Activated CD4-positive, alpha-beta memory T cell treated with anti-CD3 and anti-CD28 coated beads for 36 hours (primary cell): ENCODE measurements at regions of chr15 and their contacts with region 1.

Region 1: GRCh38 chr15:40893733-40894688 is at the start of gene VPS18:
- DNase-seq: peak; percentile 99
- H3K4me3 Mint-ChIP-seq: peak within 1 kb of the TSS; percentile 99
- H3K27ac Mint-ChIP-seq: peak within 1 kb of the TSS; percentile 86
- H3K4me1 Mint-ChIP-seq: peaks cover 27% of the 10 kb centered on the region
- H3K27me3 Mint-ChIP-seq: no peaks in the 10 kb centered on the region
- total RNA-seq, gene VPS18: 7.8 to 8.8 TPM

Region 2: GRCh38 chr15:40564591-40565332 is 329.2 kb before region 1 on chr15 and contains the start of gene CCDC32:
- CTCF ChIA-PET with region 1: interaction called, 3 read pairs
- POLR2A ChIA-PET with region 1: interaction called, 5 read pairs
- intact Hi-C with region 1: loop called (anchors 5 kb)
- DNase-seq: peak; percentile 98
- H3K4me3 Mint-ChIP-seq: peak within 1 kb of the TSS; percentile 96
- H3K27ac Mint-ChIP-seq: peak within 1 kb of the TSS; percentile 92
- H3K4me1 Mint-ChIP-seq: peaks cover 48% of the 10 kb centered on the region
- H3K27me3 Mint-ChIP-seq: peaks cover 2% of the 10 kb centered on the region
- total RNA-seq, gene CCDC32: 28.6 to 29.2 TPM

Region 3: GRCh38 chr15:40684381-40684780 is 209.6 kb before region 1 on chr15:
- CTCF ChIA-PET with region 1: interaction called, 9 read pairs
- POLR2A ChIA-PET with region 1: no interaction called
- intact Hi-C with region 1: loop called (anchors 2 kb)
- DNase-seq: no peak
- H3K4me3 Mint-ChIP-seq: no peak overlapping the region
- H3K27ac Mint-ChIP-seq: no peak overlapping the region
- H3K4me1 Mint-ChIP-seq: no peaks in the 10 kb centered on the region
- H3K27me3 Mint-ChIP-seq: no peaks in the 10 kb centered on the region

Region 4: DNA sequence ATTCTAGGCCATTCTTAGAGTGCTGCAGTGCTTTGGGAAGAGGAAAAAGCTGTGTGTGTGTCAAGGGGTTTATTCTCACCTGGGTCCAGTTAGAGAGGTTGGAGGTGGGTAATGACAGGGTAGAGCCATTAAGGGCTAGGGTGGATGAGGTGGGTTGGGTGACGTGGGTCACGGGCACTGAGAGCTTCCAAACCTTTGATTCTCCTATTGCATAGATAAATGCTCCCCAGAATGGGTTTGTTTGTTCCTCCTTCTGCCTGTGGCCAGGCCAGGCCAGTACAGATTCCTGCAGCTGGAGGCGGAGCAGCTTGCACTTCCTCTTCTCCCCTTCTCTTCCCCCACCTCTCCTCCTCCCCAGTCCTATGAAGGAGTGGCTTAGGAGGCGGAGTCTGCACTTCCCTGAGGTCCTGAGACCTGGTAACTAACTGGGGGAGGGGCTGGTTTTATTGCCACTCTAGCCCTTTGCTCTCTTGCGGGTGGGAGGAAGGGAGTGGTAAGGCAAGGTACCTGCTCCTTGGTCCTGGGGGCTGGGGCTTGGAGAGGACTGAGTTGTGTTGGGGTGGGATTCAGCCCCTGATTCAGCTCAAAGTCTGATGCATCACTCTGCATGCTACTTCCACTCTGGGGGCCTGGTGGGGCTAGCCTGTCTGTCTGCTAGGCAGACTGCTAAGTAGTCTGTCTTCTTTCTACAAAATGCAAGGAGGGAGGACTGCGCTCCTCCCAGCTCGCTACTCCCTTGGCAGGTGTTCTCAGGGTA is 46.6 kb before region 1 on chr15:
- CTCF ChIA-PET with region 1: interaction called, 11 read pairs
- POLR2A ChIA-PET with region 1: interaction called, 6 read pairs
- intact Hi-C with region 1: no loop called
- DNase-seq: no peak
- H3K4me3 Mint-ChIP-seq: no peak overlapping the region
- H3K27ac Mint-ChIP-seq: no peak overlapping the region
- H3K4me1 Mint-ChIP-seq: peaks cover 27% of the 10 kb centered on the region
- H3K27me3 Mint-ChIP-seq: peaks cover 6% of the 10 kb centered on the region

Region 5: DNA sequence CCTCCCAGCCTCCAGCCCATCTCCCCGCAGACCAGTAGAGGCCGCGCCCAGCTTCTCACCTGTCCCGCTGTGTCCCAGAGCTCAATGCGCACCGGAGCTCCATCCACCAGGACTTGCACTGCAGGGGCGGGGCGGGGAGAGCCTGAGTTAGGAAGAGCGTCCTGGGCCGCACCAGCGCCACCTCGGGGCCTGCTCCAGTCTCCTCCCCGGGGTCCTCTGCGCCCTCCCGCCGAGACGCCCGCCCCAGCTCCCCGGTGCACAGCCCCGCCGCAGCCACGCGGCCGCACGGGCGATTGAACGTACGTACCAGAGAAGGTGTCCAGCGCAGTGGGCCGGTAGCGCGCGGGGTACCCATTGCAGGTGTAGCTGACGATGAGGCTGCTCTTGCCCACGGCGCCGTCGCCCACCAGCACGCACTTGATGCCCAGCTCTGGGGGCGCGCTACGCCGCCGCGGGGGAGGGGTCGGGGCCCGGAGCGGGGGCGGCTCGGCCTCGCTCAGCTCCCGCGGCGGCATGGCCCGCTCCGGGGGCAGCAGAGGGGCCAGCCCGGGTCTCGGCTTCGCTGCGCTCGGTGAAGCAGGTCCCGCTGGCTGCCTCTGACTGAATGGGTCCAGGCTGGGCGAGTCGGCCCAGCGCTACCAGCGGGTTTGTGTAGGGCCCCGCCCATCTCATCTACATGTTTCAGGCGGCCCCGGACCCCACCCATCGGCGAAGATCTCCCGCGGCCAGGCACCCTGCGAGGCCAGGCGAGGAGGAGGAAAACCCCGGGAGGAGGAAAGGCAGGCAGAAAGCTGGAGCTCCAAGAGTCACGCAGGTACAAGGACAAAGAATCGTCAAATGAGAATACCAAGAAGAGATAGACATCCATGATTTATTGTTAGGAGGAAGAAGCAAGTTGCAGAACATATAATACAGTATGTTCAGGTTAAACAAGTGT is 20.1 kb before region 1 on chr15 and contains the start of gene RHOV:
- CTCF ChIA-PET with region 1: interaction called, 29 read pairs
- POLR2A ChIA-PET with region 1: interaction called, 6 read pairs
- intact Hi-C with region 1: no loop called
- DNase-seq: peak; percentile 67
- H3K4me3 Mint-ChIP-seq: peak within 1 kb of the TSS; percentile 69
- H3K27ac Mint-ChIP-seq: no peak within 1 kb of the TSS
- H3K4me1 Mint-ChIP-seq: peaks cover 22% of the 10 kb centered on the region
- H3K27me3 Mint-ChIP-seq: peaks cover 5% of the 10 kb centered on the region
- total RNA-seq, gene RHOV: 0.29 to 0.53 TPM

Region 6: DNA sequence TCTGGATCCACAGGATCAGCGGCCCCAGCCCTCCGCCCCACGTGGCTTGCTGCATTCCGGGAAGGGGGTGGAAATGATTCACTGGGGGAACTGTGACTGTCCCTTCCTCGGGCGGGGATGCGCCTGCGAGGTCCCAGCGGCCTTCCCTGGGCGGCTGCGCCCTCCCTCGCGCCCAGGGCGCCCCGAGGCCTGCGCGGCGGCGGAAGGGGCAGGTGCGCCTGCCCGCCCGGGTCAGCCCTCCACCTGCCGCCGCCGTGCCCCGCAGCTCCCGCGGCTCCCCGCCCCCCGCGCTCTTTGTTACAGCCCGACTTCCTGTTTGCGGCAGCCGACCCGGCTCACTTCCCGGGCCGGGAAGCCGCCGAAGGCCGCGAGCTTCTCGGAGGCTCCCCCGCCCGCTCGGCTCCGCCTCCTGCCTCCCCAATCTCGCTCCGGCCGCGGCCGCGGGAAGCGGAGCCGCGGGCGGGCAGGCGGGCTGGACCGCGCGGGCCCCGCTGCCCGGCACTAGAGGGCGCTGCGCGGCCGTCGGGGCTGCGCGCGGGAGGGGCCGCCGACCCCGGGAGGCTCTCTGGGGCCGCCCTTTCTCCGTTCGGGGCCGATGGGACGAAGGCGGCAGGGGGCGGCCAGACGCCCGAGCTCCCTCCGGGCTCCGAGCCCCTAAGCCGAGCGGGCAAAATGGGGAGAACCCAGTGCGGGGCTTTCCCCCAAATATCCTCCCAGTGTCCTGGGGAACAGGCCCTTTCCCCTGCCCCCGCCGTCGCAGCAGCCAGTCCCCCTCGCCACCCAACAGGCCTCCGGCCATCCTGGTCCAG is 47.7 kb after region 1 on chr15:
- CTCF ChIA-PET with region 1: interaction called, 29 read pairs
- POLR2A ChIA-PET with region 1: interaction called, 4 read pairs
- intact Hi-C with region 1: no loop called
- DNase-seq: peak; percentile 76
- H3K4me3 Mint-ChIP-seq: peak overlapping the region; percentile 77
- H3K27ac Mint-ChIP-seq: peak overlapping the region; percentile 61
- H3K4me1 Mint-ChIP-seq: peaks cover 31% of the 10 kb centered on the region
- H3K27me3 Mint-ChIP-seq: no peaks in the 10 kb centered on the region